A549 (cell line): ENCODE measurements at regions of chr11 and their contacts with region 1.

Region 1: DNA sequence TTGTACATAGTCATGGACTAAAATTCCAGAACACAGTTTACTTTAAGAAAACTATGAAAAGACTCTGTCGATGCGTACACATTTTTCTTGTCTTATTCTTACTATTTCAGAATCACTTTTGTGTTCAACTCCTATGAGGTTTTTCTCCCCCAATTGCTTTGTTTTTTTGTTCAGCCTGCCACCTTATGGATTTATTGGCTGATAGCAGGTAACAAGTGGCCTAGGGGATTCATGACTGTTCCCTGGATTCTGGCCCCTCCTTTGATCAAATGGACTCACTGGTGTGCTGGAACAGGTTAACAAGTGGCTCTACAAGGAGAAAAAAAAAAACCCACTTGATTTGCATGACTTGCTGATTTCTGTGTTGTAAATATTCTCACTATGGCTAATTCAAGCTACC is 10.6 kb downstream of the MMP20 start:
- DNase-seq: peak in 1 of 2 experiments; percentile 52
- ATAC-seq: peak; percentile 51 to 52; a peak in 3 of 6 replicates
- H3K4me3 ChIP-seq: no peak overlapping the region
- H3K27ac ChIP-seq: peak overlapping the region in 1 of 2 experiments; percentile 84; a peak in 3 of 6 replicates
- H3K4me1 ChIP-seq: peaks cover 41% of the 10 kb centered on the region
- CTCF ChIP-seq: peak; percentile 31; the same call in 2 of the 3 replicates
- EP300 ChIP-seq: no peak
- POLR2A ChIP-seq: no peak
- RAD21 ChIP-seq: peak; percentile 55 to 58

Region 2: GRCh38 chr11:102293873-102294601 is 320.4 kb before region 1 on chr11:
- CTCF ChIA-PET with region 1: interaction called, 20 read pairs
- POLR2A ChIA-PET with region 1: no interaction called
- DNase-seq: peak in 1 of 2 experiments; percentile 71
- ATAC-seq: peak; percentile 83 to 92
- H3K4me3 ChIP-seq: no peak overlapping the region
- H3K27ac ChIP-seq: peak overlapping the region; percentile 64 to 71; a peak in 4 of 6 replicates
- H3K4me1 ChIP-seq: peaks cover 31% of the 10 kb centered on the region; the same call in 2 of the 3 replicates
- CTCF ChIP-seq: peak; percentile 59
- EP300 ChIP-seq: no peak
- POLR2A ChIP-seq: no peak
- RAD21 ChIP-seq: peak; percentile 60 to 71

Region 3: GRCh38 chr11:102361086-102362031 is 253.1 kb before region 1 on chr11:
- CTCF ChIA-PET with region 1: interaction called, 60 read pairs
- POLR2A ChIA-PET with region 1: no interaction called
- DNase-seq: no peak
- ATAC-seq: no peak; a peak in 1 of 6 replicates
- H3K4me3 ChIP-seq: no peak overlapping the region
- H3K27ac ChIP-seq: no peak overlapping the region
- H3K4me1 ChIP-seq: no peaks in the 10 kb centered on the region
- CTCF ChIP-seq: no peak
- EP300 ChIP-seq: no peak
- POLR2A ChIP-seq: no peak
- RAD21 ChIP-seq: no peak

Region 4: GRCh38 chr11:102390667-102391465 is 223.6 kb before region 1 on chr11:
- CTCF ChIA-PET with region 1: interaction called, 81 read pairs
- POLR2A ChIA-PET with region 1: interaction called, 5 read pairs
- DNase-seq: peak; percentile 24 to 75
- ATAC-seq: peak; percentile 92 to 94
- H3K4me3 ChIP-seq: no peak overlapping the region
- H3K27ac ChIP-seq: peak overlapping the region in 1 of 2 experiments; percentile 54; a peak in 2 of 6 replicates
- H3K4me1 ChIP-seq: 0 out of 3 replicates have a peak, but pooled peaks cover 2% of the 10 kb centered on the region
- CTCF ChIP-seq: peak; percentile 63
- EP300 ChIP-seq: no peak
- POLR2A ChIP-seq: no peak
- RAD21 ChIP-seq: peak; percentile 65 to 78

Region 5: DNA sequence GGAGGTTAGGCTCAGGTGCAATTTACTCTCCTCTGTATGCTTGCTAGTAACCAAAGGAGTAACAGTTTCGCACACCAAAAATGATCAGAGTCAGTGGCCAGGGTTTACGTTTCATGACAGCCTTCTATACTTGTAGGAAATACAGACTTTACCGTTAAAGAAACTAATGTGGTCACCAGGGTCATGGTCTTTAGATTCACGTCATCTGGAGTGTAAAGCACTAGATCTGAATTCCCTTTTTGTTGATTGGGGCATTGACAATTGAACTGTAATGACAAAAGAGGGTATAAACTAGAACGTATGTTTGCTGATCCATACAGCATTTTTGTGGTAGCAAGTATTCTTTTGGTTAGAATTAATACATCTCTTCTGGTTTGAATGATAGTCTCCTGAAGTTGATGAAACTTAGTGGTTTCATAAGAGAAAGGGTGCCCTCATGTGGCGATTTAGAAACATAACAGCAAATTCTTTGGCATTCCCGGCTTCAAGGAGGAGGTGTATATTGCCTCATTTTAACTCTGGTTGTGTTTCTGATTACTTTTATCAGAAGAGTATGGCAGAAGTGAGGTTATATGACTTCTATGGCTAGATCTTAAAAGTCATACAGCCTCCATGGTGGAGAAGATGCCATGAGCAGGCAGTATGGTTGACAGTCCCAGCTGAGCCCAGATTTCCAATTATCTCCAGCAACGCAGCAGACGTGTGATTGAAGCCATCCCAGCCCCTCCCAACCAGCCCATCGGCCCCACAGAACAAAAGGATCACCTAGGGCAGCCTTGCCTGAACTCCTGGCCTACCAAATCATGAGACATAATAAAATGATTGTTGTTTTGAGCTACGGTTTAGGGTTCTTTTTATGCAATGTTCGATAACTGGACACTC is 119.1 kb before region 1 on chr11:
- CTCF ChIA-PET with region 1: interaction called, 20 read pairs
- POLR2A ChIA-PET with region 1: no interaction called
- DNase-seq: peak; percentile 41 to 86
- ATAC-seq: peak; percentile 81 to 85
- H3K4me3 ChIP-seq: no peak overlapping the region
- H3K27ac ChIP-seq: peak overlapping the region; percentile 71 to 80
- H3K4me1 ChIP-seq: peaks cover 36% of the 10 kb centered on the region
- CTCF ChIP-seq: peak; percentile 69
- EP300 ChIP-seq: no peak
- POLR2A ChIP-seq: no peak
- RAD21 ChIP-seq: peak; percentile 83 to 91

Region 6: DNA sequence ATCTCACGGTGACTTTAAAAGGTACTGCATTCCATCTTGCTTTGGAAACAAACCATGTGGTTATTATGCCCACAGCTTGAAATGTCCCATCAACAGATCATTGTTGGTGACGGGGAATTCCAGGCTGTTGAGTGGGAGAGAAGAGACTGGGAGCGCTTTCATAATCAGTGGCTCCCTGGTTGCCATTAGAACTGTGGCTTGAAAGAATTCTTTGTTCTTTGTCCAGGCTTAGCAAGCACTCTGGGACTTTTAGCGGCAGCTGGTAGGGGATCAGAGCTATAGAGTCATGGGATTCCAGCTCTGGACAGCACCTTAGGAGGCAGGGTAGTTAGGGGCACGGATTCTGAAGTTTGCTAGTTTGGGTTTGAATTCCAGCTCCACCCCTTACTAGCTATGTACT is 11.4 kb before region 1 on chr11:
- CTCF ChIA-PET with region 1: interaction called, 46 read pairs
- POLR2A ChIA-PET with region 1: no interaction called
- DNase-seq: no peak
- ATAC-seq: no peak
- H3K4me3 ChIP-seq: no peak overlapping the region
- H3K27ac ChIP-seq: peak overlapping the region; percentile 60 to 77
- H3K4me1 ChIP-seq: peaks cover 36% of the 10 kb centered on the region
- CTCF ChIP-seq: no peak
- EP300 ChIP-seq: no peak
- POLR2A ChIP-seq: no peak
- RAD21 ChIP-seq: no peak

Region 7: DNA sequence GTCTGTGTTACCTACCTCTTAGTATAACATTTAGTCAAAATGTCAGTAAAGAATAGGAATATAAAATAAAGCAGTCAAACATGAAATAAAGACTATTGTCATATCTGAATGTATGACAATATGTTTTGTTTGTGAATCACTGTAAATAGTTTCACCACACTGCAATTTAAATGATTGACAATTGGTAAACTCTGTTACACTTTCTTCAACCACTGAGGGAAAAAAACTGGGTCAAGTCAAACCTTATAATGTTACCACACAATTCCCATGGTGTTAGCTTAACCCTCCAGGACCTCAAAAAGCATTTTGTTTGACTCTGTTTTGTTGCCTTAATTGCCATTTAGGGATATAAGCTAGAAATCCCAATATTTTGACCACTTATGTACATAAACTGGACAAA is 351.5 kb after region 1 on chr11:
- CTCF ChIA-PET with region 1: no interaction called
- POLR2A ChIA-PET with region 1: no interaction called
- DNase-seq: no peak
- ATAC-seq: no peak
- H3K4me3 ChIP-seq: no peak overlapping the region
- H3K27ac ChIP-seq: no peak overlapping the region
- H3K4me1 ChIP-seq: no peaks in the 10 kb centered on the region
- CTCF ChIP-seq: no peak
- EP300 ChIP-seq: no peak
- POLR2A ChIP-seq: no peak
- RAD21 ChIP-seq: no peak